ENCODE measurements at regions of chr22 and their contacts with region 1.

Region 1: GRCh38 chr22:20298803-20299735 is 20.8 kb downstream of the DGCR6L start:
- DNase-seq: peak; percentile 77
- H3K4me3 ChIP-seq: peak overlapping the region; percentile 37 to 50 (median 44)
- H3K27ac ChIP-seq: no peak overlapping the region
- H3K4me1 ChIP-seq: no peaks in the 10 kb centered on the region
- H3K27me3 ChIP-seq: no peaks in the 10 kb centered on the region
- CTCF ChIP-seq: no peak

Region 2: DNA sequence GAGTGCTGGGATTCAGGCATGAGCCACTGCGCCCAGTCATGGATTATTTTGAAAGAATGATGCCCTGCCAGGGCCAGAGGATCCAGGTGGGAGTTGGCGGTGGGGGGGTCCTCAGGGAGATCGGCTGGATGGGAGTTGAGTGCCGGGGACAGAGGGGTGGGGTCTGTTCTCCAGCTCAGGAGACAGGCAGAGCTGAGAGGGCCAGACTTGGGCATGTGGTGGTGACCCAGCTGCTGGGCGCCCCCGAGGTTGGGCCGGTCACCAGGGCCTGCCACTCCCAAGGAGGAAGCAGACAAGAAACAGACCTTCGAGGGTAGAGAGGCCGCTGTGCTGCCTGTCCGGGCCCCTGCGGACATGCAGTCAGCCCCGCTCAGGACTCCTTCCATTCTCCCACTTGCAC is 1351.2 kb before region 1 on chr22:
- CTCF ChIA-PET with region 1: no interaction called
- dilution Hi-C with region 1: no loop called
- in situ Hi-C with region 1: loop called in 1 of 2 experiments (anchors 25 kb)
- intact Hi-C with region 1: no loop called
- DNase-seq: no peak
- H3K4me3 ChIP-seq: no peak overlapping the region
- H3K27ac ChIP-seq: no peak overlapping the region
- H3K4me1 ChIP-seq: no peaks in the 10 kb centered on the region
- H3K27me3 ChIP-seq: no peaks in the 10 kb centered on the region
- CTCF ChIP-seq: no peak

Region 3: GRCh38 chr22:20238536-20238900 is 60.6 kb before region 1 on chr22:
- CTCF ChIA-PET with region 1: no interaction called
- dilution Hi-C with region 1: no loop called
- in situ Hi-C with region 1: no loop called
- intact Hi-C with region 1: no loop called
- DNase-seq: peak; percentile 13
- H3K4me3 ChIP-seq: no peak overlapping the region
- H3K27ac ChIP-seq: no peak overlapping the region
- H3K4me1 ChIP-seq: peaks cover 26% of the 10 kb centered on the region
- H3K27me3 ChIP-seq: no peaks in the 10 kb centered on the region
- CTCF ChIP-seq: peak; percentile 35 to 69

Region 4: DNA sequence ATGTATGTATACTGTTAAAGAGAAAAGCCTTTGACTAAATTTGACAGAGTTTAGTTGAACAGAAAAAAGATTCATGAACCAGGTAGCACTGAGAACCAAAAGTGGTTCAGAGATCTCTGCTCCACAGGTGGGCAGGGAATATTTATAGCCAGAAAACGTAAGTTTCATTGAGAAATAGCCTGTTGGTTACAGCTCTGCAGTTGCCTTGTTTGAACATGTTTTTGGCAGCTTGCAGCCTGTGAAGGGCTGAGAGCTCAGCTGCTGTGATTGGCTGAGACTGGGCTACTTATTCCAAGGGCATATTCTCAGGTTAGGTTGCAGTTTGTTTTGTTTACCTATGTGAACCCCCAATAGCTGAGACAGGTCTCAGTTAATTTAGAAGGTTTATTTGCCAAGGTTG is 81.4 kb after region 1 on chr22:
- CTCF ChIA-PET with region 1: no interaction called
- dilution Hi-C with region 1: no loop called
- in situ Hi-C with region 1: no loop called
- intact Hi-C with region 1: no loop called
- DNase-seq: peak; percentile 60
- H3K4me3 ChIP-seq: no peak overlapping the region
- H3K27ac ChIP-seq: no peak overlapping the region
- H3K4me1 ChIP-seq: peaks cover 8% of the 10 kb centered on the region
- H3K27me3 ChIP-seq: peaks cover 2% of the 10 kb centered on the region
- CTCF ChIP-seq: no peak

Region 5: GRCh38 chr22:20456064-20456721 is 157.1 kb after region 1 on chr22:
- CTCF ChIA-PET with region 1: no interaction called
- dilution Hi-C with region 1: no loop called
- in situ Hi-C with region 1: no loop called
- intact Hi-C with region 1: loop called (anchors 5 kb)
- DNase-seq: peak; percentile 48
- H3K4me3 ChIP-seq: no peak overlapping the region
- H3K27ac ChIP-seq: no peak overlapping the region
- H3K4me1 ChIP-seq: no peaks in the 10 kb centered on the region
- H3K27me3 ChIP-seq: no peaks in the 10 kb centered on the region
- CTCF ChIP-seq: peak; percentile 85 to 91